Psoas muscle (tissue), 8 donors: ENCODE measurements at regions of chr11 and their contacts with region 1.

Region 1: GRCh38 chr11:124837491-124837856 is 27.8 kb upstream of the ROBO3 start:
- DNase-seq: no peak
- ATAC-seq: peak in 2 of 4 donors; percentile 53 to 60
- H3K4me3 ChIP-seq: no peak overlapping the region
- H3K27ac ChIP-seq: no peak overlapping the region
- H3K4me1 ChIP-seq: peaks cover 9% of the 10 kb centered on the region
- H3K27me3 ChIP-seq: peaks cover 0 to 46% (median 25%) of the 10 kb centered on the region in 3 donors
- CTCF ChIP-seq: no peak

Region 2: GRCh38 chr11:124644426-124645280 is 192.8 kb before region 1 on chr11:
- intact Hi-C with region 1: loop called in 1 of 2 experiments (anchors 5 kb)
- DNase-seq: peak; percentile 42 to 57
- ATAC-seq: peak; percentile 73 to 91 (median 83)
- H3K4me3 ChIP-seq: no peak overlapping the region
- H3K27ac ChIP-seq: no peak overlapping the region
- H3K4me1 ChIP-seq: no peaks in the 10 kb centered on the region
- H3K27me3 ChIP-seq: no peaks in the 10 kb centered on the region
- CTCF ChIP-seq: peak; percentile 73

Region 3: DNA sequence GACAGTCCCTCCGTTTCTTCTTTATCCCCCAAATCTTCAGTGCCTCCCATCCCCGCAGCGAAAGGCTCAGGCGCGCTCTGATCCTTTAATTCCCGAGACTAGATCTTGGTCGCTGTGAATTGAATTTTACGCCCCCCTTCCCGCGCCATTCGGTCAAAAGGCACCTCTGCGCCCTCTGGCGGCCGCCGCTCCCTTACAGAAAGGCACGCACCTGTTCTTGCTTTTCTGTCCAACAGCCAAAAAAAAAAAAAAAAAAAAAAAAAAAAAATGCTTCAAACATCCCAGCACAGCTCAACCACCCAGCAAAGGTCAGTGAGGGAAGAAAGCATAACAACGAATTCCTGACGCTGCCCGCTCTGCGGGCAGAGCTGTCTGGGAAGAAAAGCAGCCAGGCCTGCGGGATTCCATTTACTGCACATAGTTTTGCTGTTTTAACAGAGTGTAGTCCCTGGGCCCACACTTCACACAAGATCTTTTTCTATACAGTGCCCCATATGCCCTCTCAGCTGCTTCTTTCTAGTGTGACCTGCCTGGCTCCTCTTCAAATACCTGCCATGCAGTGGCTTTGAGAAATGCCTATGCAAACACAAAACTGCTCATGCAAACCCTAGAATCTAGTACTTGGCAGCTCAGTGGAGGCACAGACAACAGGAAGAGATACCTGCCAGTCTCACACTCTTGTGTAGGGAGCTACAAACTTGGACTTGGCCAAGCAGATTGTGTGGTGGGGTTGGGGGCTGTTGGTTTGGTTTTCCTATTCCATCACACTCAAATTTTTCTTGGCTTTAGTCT is 74.1 kb before region 1 on chr11:
- intact Hi-C with region 1: loop called (anchors 2 to 5 kb)
- DNase-seq: peak; percentile 84 to 92
- ATAC-seq: peak; percentile 39 to 79 (median 64)
- H3K4me3 ChIP-seq: peak overlapping the region; percentile 74
- H3K27ac ChIP-seq: peak overlapping the region; percentile 81
- H3K4me1 ChIP-seq: peaks cover 27% of the 10 kb centered on the region
- H3K27me3 ChIP-seq: peaks cover 0 to 39% (median 23%) of the 10 kb centered on the region in 3 donors
- CTCF ChIP-seq: peak; percentile 74

Region 4: DNA sequence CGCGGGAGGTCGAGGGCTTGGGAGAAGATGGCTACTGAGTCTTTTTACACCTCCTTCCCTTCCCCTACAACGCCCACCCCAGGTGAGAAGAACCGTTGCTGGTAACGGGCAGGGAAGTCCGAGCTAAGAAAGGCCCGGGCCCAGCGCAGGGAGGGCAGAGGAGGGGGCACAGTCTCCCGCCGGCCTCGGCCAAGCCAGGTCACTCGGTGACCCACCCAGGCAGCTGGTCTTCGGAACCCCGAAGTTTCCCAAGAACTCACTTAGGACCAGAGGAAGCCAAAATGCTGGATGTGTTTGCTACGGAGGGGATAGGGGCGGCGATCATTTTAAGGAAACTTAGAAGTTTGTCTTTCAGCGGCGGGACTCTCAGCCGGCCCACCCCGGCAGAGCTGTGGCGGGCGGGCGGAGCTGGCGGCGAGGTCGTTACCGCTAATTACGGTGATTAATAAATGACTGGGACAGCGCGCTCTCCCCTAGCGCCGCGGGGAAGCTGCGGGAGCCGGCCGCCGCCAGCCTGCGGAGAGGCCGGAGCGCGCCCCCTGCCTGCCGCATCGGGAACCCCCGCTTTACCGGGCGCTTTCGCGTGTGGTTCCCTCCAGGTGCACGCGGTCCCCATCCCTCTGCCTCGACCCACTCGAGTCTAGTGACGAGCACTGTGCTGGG is 28.6 kb after region 1 on chr11:
- intact Hi-C with region 1: loop called in 1 of 2 experiments (anchors 1 kb)
- DNase-seq: peak; percentile 44 to 72
- ATAC-seq: peak; percentile 54 to 87 (median 64)
- H3K4me3 ChIP-seq: peak overlapping the region; percentile 50
- H3K27ac ChIP-seq: no peak overlapping the region
- H3K4me1 ChIP-seq: peaks cover 26% of the 10 kb centered on the region
- H3K27me3 ChIP-seq: peaks cover 3 to 99% (median 48%) of the 10 kb centered on the region in 3 donors
- CTCF ChIP-seq: peak; percentile 79

Region 5: GRCh38 chr11:124934862-124935547 is 97.5 kb after region 1 on chr11:
- intact Hi-C with region 1: no loop called
- DNase-seq: no peak
- ATAC-seq: no peak
- H3K4me3 ChIP-seq: no peak overlapping the region
- H3K27ac ChIP-seq: no peak overlapping the region
- H3K4me1 ChIP-seq: no peaks in the 10 kb centered on the region
- H3K27me3 ChIP-seq: peaks cover 0 to 10% (median 0%) of the 10 kb centered on the region in 3 donors
- CTCF ChIP-seq: no peak